A673 (cell line): ENCODE measurements at regions of chr15 and their contacts with region 1.

Region 1: GRCh38 chr15:88790486-88790885 is 12.8 kb upstream of the ACAN start:
- DNase-seq: no peak
- H3K4me3 ChIP-seq: no peak overlapping the region
- H3K27ac ChIP-seq: no peak overlapping the region
- H3K4me1 ChIP-seq: no peaks in the 10 kb centered on the region
- H3K27me3 ChIP-seq: peaks cover 66% of the 10 kb centered on the region
- CTCF ChIP-seq: no peak

Region 2: GRCh38 chr15:88727439-88727838 is 63.0 kb before region 1 on chr15:
- CTCF ChIA-PET with region 1: no interaction called
- POLR2A ChIA-PET with region 1: no interaction called
- intact Hi-C with region 1: no loop called
- DNase-seq: no peak
- H3K4me3 ChIP-seq: no peak overlapping the region
- H3K27ac ChIP-seq: no peak overlapping the region
- H3K4me1 ChIP-seq: no peaks in the 10 kb centered on the region
- H3K27me3 ChIP-seq: no peaks in the 10 kb centered on the region
- CTCF ChIP-seq: no peak

Region 3: GRCh38 chr15:88800738-88801137 is 10.3 kb after region 1 on chr15:
- CTCF ChIA-PET with region 1: no interaction called
- POLR2A ChIA-PET with region 1: interaction called, 15 read pairs
- intact Hi-C with region 1: no loop called
- DNase-seq: no peak
- H3K4me3 ChIP-seq: no peak overlapping the region
- H3K27ac ChIP-seq: no peak overlapping the region
- H3K4me1 ChIP-seq: no peaks in the 10 kb centered on the region
- H3K27me3 ChIP-seq: peaks cover 94% of the 10 kb centered on the region
- CTCF ChIP-seq: no peak